ENCODE measurements at regions of chr2 and their contacts with region 1.

Region 1: DNA sequence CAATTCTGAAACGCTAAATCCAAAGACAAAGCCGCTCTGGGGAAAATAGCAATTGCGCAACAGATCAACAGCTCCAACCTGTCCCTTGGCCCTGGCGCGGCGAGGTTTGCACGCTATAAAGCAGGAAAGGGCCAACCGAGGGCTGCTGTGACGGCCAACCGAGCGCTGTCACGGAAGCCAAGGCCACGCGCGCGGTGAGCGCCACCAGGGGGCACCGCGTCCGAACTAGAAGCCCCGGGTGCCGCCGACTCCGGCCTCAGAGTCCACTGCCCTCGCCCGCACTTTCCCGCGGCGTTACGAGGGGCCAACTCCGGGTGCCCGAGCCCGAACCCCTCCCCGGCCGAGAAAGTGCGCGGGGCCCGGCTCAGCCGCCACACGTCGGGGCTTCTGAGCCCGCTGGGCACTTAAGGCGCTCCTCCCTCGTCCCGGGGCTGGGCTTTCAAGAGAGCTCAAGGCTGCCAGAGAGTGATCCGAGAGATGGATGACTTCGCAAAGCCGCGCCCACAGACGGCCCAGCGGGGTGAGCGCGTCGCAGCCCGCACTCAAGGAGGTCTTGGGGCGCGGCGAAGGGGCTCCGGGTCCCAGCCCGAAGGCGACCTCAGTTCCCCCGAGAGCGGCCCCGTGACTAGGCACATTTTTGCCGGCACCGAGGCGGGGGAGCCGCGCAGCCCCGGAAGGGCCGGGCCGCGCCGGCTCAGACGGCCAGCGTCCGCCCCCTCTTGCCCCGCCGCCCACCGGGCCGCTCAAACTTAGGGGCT is 897 bp downstream of the NFE2L2 start:
- DNase-seq: peak; percentile 89
- H3K4me3 ChIP-seq: peak overlapping the region; percentile 71 to 93
- H3K27ac ChIP-seq: peak overlapping the region; percentile 97
- H3K4me1 ChIP-seq: peaks cover 17 to 22% of the 10 kb centered on the region in 2 experiments
- H3K27me3 ChIP-seq: no peaks in the 10 kb centered on the region
- CTCF ChIP-seq: peak; percentile 79
- EP300 ChIP-seq: no peak
- RAD21 ChIP-seq: peak; percentile 66

Region 2: GRCh38 chr2:177229448-177230242 is 34.0 kb before region 1 on chr2:
- CTCF ChIA-PET with region 1: interaction called, 13 read pairs
- POLR2A ChIA-PET with region 1: interaction called, 3 read pairs
- DNase-seq: no peak
- H3K4me3 ChIP-seq: no peak overlapping the region
- H3K27ac ChIP-seq: peak overlapping the region in 1 of 2 experiments; percentile 2; a peak in 2 of 4 replicates
- H3K4me1 ChIP-seq: no peaks in the 10 kb centered on the region; a peak in 1 of 4 replicates
- H3K27me3 ChIP-seq: no peaks in the 10 kb centered on the region
- CTCF ChIP-seq: no peak
- EP300 ChIP-seq: no peak
- RAD21 ChIP-seq: no peak

Region 3: GRCh38 chr2:177281400-177282180 is 18.0 kb after region 1 on chr2:
- CTCF ChIA-PET with region 1: interaction called, 25 read pairs
- POLR2A ChIA-PET with region 1: interaction called, 3 read pairs
- DNase-seq: no peak
- H3K4me3 ChIP-seq: no peak overlapping the region
- H3K27ac ChIP-seq: no peak overlapping the region
- H3K4me1 ChIP-seq: peaks cover 4 to 14% of the 10 kb centered on the region in 2 experiments; a peak in 2 of 4 replicates
- H3K27me3 ChIP-seq: no peaks in the 10 kb centered on the region
- CTCF ChIP-seq: no peak
- EP300 ChIP-seq: no peak
- RAD21 ChIP-seq: no peak

Region 4: DNA sequence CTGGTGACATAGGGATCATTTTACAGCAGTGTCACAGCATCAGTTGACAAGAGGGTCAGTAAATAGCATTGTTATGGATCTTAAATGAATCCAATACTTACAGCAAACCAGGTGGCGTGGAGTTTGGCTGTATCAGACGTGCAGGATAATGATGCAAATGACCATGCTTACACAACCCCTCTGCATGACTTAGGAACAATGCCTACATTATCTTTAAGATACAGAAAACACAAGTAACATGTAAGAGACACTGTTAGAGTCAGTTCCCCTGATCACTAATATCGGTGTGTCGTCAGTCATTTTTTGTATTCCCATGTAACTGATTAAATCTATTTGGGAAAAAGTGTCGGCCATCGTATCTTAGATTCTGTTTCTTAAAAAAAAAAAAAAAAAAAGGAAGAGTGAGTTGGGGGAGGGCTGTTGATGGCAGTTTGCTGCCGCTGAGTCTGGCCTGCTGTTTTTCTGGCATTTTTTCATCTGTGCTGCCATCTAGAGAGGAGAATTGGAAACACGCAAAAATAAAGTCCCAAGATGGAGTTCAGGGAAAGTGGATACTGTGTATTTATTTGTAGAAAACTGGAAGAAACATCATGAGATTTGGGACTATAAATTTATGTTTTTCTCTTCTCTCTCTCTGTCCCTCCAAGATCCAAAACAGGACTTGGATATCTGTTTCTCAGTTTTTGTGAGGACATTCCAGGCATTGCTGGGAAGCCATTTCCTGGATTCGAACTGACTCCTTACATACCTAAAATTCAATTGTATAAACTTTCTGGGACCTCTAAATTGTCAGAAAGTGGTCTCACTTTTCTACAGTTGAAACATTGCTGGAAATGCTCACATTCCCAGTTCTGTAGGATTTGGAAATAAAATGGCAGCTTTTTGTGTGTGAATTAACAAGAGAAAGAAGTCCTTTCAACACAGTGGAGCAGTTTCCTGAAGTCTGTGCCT is 68.7 kb after region 1 on chr2:
- CTCF ChIA-PET with region 1: interaction called, 14 read pairs
- POLR2A ChIA-PET with region 1: interaction called, 4 read pairs
- DNase-seq: peak; percentile 46
- H3K4me3 ChIP-seq: no peak overlapping the region; a peak in 1 of 4 replicates
- H3K27ac ChIP-seq: peak overlapping the region; percentile 58 to 67
- H3K4me1 ChIP-seq: peaks cover 3 to 13% of the 10 kb centered on the region in 2 experiments; a peak in 3 of 4 replicates
- H3K27me3 ChIP-seq: no peaks in the 10 kb centered on the region
- CTCF ChIP-seq: peak; percentile 75
- EP300 ChIP-seq: no peak
- RAD21 ChIP-seq: peak; percentile 87

Measured in SK-N-SH (cell line).